A673 (cell line): ENCODE measurements at regions of chr7 and their contacts with region 1.

Region 1: DNA sequence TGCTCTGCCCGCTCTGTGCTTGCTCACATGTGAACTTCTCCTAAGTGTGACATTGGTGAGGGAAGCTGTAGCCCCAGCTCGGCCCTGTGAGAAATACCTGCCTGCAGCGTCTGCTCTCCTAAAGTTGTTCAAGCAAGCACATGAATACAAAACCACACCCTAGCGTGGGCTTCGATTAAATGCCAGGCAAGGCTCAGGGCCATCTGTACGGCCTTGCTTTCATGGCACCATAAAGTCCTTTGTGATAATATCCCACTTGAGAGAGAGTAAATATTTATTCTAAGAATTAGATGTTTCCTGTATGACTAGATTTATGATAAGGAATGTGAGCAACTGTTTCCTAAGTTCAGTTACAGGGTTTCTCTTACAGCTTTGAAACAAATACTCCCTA is 262.8 kb upstream of the KLF14 start:
- DNase-seq: peak; percentile 64
- H3K4me3 ChIP-seq: no peak overlapping the region
- H3K27ac ChIP-seq: no peak overlapping the region
- H3K4me1 ChIP-seq: peaks cover 56% of the 10 kb centered on the region
- H3K27me3 ChIP-seq: no peaks in the 10 kb centered on the region
- CTCF ChIP-seq: no peak

Region 2: DNA sequence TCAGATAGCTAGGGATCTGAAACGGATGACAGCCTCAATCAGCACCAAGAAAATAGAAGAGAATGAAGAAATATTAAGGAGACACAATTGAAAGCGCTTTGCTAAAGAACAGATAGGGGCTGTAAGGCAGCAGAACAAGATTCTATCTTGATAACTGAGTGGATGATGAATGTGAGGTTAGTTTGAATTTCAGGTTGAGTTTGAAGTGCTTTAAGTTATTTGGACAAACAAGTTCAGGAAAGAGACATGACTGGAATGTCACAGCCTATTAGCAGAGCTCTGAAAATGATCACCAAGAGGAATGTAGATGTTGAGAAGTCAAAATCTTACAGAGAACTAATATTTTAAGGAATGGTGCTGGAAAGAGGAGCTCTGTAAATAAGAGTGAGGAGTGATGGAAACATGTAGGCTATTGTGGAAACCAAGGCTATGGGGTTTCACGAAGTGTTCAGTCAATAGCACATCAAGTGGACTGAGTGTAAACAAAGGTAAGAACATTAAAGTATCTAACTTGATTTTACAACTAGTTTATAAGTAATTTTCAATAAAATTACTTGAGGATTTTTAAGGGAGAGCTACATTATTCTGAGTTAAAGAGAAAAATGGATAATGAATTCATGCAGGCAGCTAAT is 443.3 kb before region 1 on chr7:
- CTCF ChIA-PET with region 1: no interaction called
- POLR2A ChIA-PET with region 1: interaction called, 13 read pairs
- intact Hi-C with region 1: no loop called
- DNase-seq: no peak
- H3K4me3 ChIP-seq: no peak overlapping the region
- H3K27ac ChIP-seq: no peak overlapping the region
- H3K4me1 ChIP-seq: no peaks in the 10 kb centered on the region
- H3K27me3 ChIP-seq: no peaks in the 10 kb centered on the region
- CTCF ChIP-seq: no peak

Region 3: GRCh38 chr7:130961128-130961601 is 35.7 kb before region 1 on chr7:
- CTCF ChIA-PET with region 1: no interaction called
- POLR2A ChIA-PET with region 1: no interaction called
- intact Hi-C with region 1: no loop called
- DNase-seq: peak; percentile 93
- H3K4me3 ChIP-seq: peak overlapping the region; percentile 61
- H3K27ac ChIP-seq: peak overlapping the region; percentile 94
- H3K4me1 ChIP-seq: peaks cover 30% of the 10 kb centered on the region
- H3K27me3 ChIP-seq: no peaks in the 10 kb centered on the region
- CTCF ChIP-seq: no peak

Region 4: DNA sequence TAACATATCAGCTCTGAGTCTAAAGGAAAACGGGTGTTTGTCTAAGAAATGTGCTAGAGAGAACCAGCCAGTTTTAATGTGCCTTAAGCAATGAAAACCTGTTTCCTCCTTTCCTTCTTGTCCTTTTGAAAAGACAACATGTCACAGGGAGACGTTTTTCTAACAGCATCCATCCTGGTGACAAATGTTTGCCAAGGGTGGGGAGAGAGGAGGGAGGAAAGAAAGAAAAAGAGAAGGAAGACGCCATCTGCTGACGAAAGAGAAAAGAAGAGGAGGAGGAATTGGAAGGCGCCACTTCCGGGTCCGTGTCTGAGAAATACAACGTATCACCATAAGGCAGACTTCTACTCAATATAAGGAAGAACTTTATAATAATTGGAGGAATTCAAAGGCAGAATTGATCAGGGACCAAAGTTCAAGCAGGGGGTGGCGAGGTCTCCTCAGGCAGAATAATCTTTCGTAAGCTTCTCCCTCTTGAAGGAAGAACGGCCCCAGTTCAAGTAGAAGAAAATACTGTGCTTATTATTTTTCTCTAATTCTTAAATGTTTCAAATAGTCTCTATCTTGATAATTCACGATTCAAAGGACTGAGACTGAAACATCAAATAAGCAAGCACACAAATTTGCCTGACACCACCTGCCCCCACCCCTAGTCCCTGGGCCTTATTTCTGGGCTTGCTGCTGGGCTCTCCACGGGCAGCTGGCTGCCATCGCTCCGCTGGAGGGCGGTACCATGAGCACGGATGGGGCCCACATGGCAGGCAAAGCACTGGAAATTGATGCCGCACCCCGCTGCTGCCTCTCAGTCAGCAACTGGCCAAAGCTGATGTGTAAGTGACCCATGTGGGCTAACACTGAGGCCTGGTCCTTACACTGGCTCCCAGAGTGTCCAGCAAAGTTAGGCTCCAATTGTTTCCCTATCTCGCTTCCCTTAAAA is 10.8 kb after region 1 on chr7:
- CTCF ChIA-PET with region 1: interaction called, 10 read pairs
- POLR2A ChIA-PET with region 1: no interaction called
- intact Hi-C with region 1: no loop called
- DNase-seq: peak; percentile 95
- H3K4me3 ChIP-seq: peak overlapping the region; percentile 1
- H3K27ac ChIP-seq: peak overlapping the region; percentile 95
- H3K4me1 ChIP-seq: peaks cover 58% of the 10 kb centered on the region
- H3K27me3 ChIP-seq: no peaks in the 10 kb centered on the region
- CTCF ChIP-seq: peak; percentile 67

Region 5: GRCh38 chr7:131164025-131164899 is 167.4 kb after region 1 on chr7:
- CTCF ChIA-PET with region 1: no interaction called
- POLR2A ChIA-PET with region 1: no interaction called
- intact Hi-C with region 1: no loop called
- DNase-seq: no peak
- H3K4me3 ChIP-seq: no peak overlapping the region
- H3K27ac ChIP-seq: no peak overlapping the region
- H3K4me1 ChIP-seq: no peaks in the 10 kb centered on the region
- H3K27me3 ChIP-seq: no peaks in the 10 kb centered on the region
- CTCF ChIP-seq: no peak

Region 6: DNA sequence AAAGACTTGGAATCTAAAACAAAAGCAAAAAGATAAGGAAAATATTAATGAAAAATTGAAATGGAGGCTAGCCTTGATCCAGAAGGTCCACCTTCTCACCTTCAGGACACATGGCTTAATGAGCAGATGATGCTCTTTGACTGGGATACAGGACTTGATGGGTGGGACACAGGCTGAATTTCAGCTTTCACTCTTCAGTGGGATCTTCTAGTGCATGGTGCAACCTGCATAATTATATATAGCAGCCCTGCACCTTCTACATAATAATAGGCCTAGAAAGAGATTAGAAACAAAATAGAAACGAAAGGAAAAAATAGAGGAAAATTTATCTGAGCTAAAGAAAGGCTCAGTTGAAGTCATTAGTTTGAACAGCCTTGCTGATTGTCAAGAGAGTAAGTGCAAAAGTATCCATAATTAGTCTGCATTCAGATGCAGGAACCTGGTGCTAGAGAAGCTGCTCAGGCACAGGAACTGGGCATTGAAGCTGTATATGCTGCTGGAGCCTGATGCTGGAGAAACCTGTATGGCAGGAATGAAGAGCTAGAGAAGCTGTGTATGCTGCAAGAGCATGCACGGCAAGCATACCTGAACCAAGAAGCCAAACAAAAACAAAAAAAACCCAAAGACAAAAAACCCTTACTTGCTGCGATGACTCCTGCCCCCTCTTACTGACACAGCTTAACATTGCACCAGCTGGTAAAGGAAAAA is 350.2 kb after region 1 on chr7:
- CTCF ChIA-PET with region 1: no interaction called
- POLR2A ChIA-PET with region 1: no interaction called
- intact Hi-C with region 1: no loop called
- DNase-seq: no peak
- H3K4me3 ChIP-seq: no peak overlapping the region
- H3K27ac ChIP-seq: no peak overlapping the region
- H3K4me1 ChIP-seq: peaks cover 10% of the 10 kb centered on the region
- H3K27me3 ChIP-seq: no peaks in the 10 kb centered on the region
- CTCF ChIP-seq: no peak